CD4-positive, alpha-beta memory T cell (primary cell): ENCODE measurements at regions of chr11 and their contacts with region 1.

Region 1: DNA sequence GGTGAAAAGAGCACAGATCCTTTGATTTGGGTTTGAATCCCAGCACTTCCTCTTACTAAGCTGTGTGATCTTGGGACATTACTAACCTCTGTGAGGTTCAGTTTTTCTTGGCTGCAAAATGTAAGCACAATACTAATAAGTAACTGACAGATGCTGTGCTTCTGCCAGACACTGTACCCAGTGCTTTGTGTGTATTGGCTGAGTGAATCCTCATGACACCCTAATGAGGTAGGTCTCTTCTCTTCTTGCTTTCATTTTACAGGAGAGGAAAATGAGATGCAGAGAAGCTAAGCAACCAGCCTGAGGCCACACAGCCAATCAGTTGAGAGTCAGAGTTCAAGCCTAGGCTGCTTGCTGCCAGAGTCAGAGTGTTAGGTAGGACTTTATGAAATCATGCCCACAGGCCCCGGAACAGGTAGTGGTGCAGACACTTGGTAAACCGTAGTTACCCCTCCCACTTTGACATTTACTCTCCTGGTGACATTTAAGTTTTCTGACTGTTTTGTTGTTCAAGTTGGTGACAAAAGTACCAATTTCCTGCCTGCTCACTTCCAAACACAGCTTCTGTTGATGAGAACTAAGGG is 21.2 kb downstream of the PTPRJ start:
- DNase-seq: peak; percentile 90 to 97 (median 95)
- H3K4me3 ChIP-seq: peak overlapping the region in 1 of 2 donors; percentile 14
- H3K4me3 Mint-ChIP-seq: peak overlapping the region; percentile 66 to 93 (median 76)
- H3K27ac ChIP-seq: peak overlapping the region; percentile 65
- H3K27ac Mint-ChIP-seq: peak overlapping the region; percentile 90 to 99 (median 97)
- H3K4me1 ChIP-seq: peaks cover 95% of the 10 kb centered on the region
- H3K4me1 Mint-ChIP-seq: peaks cover 61 to 93% (median 80%) of the 10 kb centered on the region in 4 donors
- H3K27me3 ChIP-seq: no peaks in the 10 kb centered on the region
- H3K27me3 Mint-ChIP-seq: no peaks in the 10 kb centered on the region

Region 2: GRCh38 chr11:47863189-47863892 is 138.2 kb before region 1 on chr11:
- CTCF ChIA-PET with region 1: no interaction called
- POLR2A ChIA-PET with region 1: no interaction called
- intact Hi-C with region 1: loop called (anchors 5 kb)
- DNase-seq: peak in 4 of 5 donors; percentile 59 to 77 (median 74)
- H3K4me3 ChIP-seq: no peak overlapping the region
- H3K4me3 Mint-ChIP-seq: peak overlapping the region in 7 of 8 donors; percentile 17 to 73 (median 49)
- H3K27ac ChIP-seq: peak overlapping the region; percentile 30
- H3K27ac Mint-ChIP-seq: peak overlapping the region; percentile 14 to 80 (median 70)
- H3K4me1 ChIP-seq: peaks cover 43% of the 10 kb centered on the region
- H3K4me1 Mint-ChIP-seq: peaks cover 23 to 49% (median 39%) of the 10 kb centered on the region in 4 donors
- H3K27me3 ChIP-seq: no peaks in the 10 kb centered on the region
- H3K27me3 Mint-ChIP-seq: no peaks in the 10 kb centered on the region

Region 3: GRCh38 chr11:48013269-48013901 is 11.9 kb after region 1 on chr11:
- CTCF ChIA-PET with region 1: interaction called, 24 read pairs
- POLR2A ChIA-PET with region 1: interaction called, 296 read pairs
- intact Hi-C with region 1: loop called (anchors 1 kb)
- DNase-seq: peak; percentile 47 to 83 (median 54)
- H3K4me3 ChIP-seq: peak overlapping the region in 1 of 2 donors; percentile 44
- H3K4me3 Mint-ChIP-seq: peak overlapping the region in 7 of 8 donors; percentile 67 to 83 (median 77)
- H3K27ac ChIP-seq: peak overlapping the region; percentile 76
- H3K27ac Mint-ChIP-seq: peak overlapping the region; percentile 84 to 98 (median 97)
- H3K4me1 ChIP-seq: peaks cover 93% of the 10 kb centered on the region
- H3K4me1 Mint-ChIP-seq: peaks cover 66 to 91% (median 83%) of the 10 kb centered on the region in 4 donors
- H3K27me3 ChIP-seq: no peaks in the 10 kb centered on the region
- H3K27me3 Mint-ChIP-seq: no peaks in the 10 kb centered on the region

Region 4: DNA sequence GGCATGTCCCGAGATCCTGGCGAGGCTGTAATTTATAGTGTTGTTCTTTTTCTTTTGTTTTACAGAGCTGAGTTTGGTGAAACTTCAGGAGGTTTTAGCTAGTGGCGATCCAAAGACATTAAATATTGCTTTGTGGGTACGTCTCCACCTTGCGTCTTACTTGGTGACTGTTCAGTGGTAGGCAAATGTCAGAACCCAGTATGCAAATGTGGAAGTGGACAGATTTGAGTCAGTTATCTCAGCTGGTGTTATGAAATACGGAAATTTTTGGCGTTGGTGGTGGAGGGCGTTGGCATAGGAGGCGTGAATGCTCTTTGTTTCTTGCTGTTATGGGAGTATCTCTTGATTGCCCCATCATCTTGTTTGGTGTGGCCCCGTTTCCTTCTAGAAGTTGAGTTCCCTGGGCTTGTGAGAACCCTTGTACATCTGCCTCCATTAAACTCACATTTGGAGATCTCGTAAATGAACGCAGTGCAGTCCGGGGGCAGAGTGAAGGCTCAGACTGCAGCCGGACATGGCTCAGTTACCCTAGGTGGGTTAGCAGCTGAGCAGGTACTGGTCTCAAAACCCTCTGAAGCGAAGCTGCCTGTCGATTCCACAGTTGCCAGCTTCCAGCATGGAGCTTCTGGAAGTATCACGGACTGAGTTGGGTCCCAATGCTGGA is 18.7 kb after region 1 on chr11:
- CTCF ChIA-PET with region 1: interaction called, 24 read pairs
- POLR2A ChIA-PET with region 1: interaction called, 296 read pairs
- intact Hi-C with region 1: loop called (anchors 1 kb)
- DNase-seq: peak; percentile 58 to 74 (median 59)
- H3K4me3 ChIP-seq: peak overlapping the region in 1 of 2 donors; percentile 17
- H3K4me3 Mint-ChIP-seq: peak overlapping the region; percentile 21 to 85 (median 70)
- H3K27ac ChIP-seq: peak overlapping the region; percentile 59
- H3K27ac Mint-ChIP-seq: peak overlapping the region; percentile 75 to 93 (median 84)
- H3K4me1 ChIP-seq: peaks cover 62% of the 10 kb centered on the region
- H3K4me1 Mint-ChIP-seq: peaks cover 54 to 77% (median 65%) of the 10 kb centered on the region in 4 donors
- H3K27me3 ChIP-seq: no peaks in the 10 kb centered on the region
- H3K27me3 Mint-ChIP-seq: no peaks in the 10 kb centered on the region